ENCODE measurements at regions of chr11 and their contacts with region 1.

Region 1: GRCh38 chr11:110195845-110196754 is 100.3 kb downstream of the RDX start:
- DNase-seq: no peak
- ATAC-seq: no peak
- H3K4me3 ChIP-seq: no peak overlapping the region
- H3K27ac ChIP-seq: no peak overlapping the region
- H3K4me1 ChIP-seq: peaks cover 4% of the 10 kb centered on the region; the same call in 1 of the 2 replicates
- H3K27me3 ChIP-seq: no peaks in the 10 kb centered on the region
- CTCF ChIP-seq: no peak
- EP300 ChIP-seq: no peak
- POLR2A ChIP-seq: no peak
- RAD21 ChIP-seq: no peak

Region 2: GRCh38 chr11:109939166-109939810 is 256.8 kb before region 1 on chr11:
- CTCF ChIA-PET with region 1: interaction called, 21 read pairs
- POLR2A ChIA-PET with region 1: no interaction called
- RAD21 ChIA-PET with region 1: interaction called, 29 read pairs
- SMC1A ChIA-PET with region 1: interaction called, 86 read pairs
- in situ Hi-C with region 1: no loop called
- intact Hi-C with region 1: no loop called
- DNase-seq: no peak
- ATAC-seq: peak; percentile 82
- H3K4me3 ChIP-seq: no peak overlapping the region
- H3K27ac ChIP-seq: no peak overlapping the region
- H3K4me1 ChIP-seq: no peaks in the 10 kb centered on the region
- H3K27me3 ChIP-seq: no peaks in the 10 kb centered on the region; a peak in 1 of 4 replicates
- CTCF ChIP-seq: peak; percentile 49 to 85 (median 60)
- EP300 ChIP-seq: no peak
- POLR2A ChIP-seq: no peak
- RAD21 ChIP-seq: peak; percentile 97

Region 3: DNA sequence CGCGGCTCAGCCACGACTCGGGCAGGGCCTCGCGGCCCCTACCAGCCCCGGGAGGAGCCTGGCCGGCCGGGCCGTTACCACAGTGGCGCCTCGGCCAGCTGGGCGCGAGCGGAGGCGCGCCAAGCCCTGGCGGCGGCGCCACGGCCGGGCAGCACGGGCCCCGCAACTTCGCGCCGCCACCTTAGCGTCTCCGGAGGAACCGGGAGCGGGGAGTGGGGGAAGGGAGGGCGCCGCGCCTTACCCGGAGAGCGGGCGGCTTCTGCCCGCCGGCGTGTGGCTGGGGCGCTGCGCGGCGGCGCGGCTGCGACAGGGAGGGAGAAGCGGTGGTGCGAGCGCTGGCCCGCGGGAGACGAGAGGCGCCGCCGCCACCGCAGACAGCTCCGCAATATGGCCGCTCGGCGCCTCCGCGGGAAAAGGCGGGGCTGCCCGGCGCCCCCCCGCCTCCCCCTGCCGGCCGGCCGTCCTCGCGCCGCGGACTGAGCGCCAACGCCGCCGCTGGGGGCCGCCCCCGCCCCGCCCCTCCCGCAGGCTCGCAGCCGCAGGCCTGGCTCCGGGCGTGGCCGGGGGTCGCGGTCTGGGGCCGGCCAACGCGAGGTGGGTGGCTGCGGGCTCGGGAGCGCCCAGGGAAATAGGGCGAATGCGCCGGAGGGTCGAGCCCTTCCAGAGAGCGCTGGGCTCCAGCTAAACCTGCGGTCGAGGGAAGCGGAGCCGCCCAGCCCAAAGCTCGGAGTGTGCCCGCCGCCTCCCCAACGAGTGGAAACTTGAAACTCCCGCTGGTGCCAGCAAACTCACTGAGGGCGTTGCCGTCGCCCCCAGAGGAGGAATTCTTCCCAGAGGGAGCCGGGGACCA is 100.4 kb after region 1 on chr11 and contains the start of gene RDX:
- CTCF ChIA-PET with region 1: interaction called, 12 read pairs
- POLR2A ChIA-PET with region 1: no interaction called
- RAD21 ChIA-PET with region 1: interaction called, 5 read pairs
- SMC1A ChIA-PET with region 1: interaction called, 3 read pairs
- in situ Hi-C with region 1: no loop called
- intact Hi-C with region 1: no loop called
- DNase-seq: no peak
- ATAC-seq: peak; percentile 73
- H3K4me3 ChIP-seq: peak within 1 kb of the TSS; percentile 98
- H3K27ac ChIP-seq: peak within 1 kb of the TSS; percentile 94
- H3K4me1 ChIP-seq: no peaks in the 10 kb centered on the region
- H3K27me3 ChIP-seq: no peaks in the 10 kb centered on the region
- CTCF ChIP-seq: peak in 1 of 3 experiments; percentile 20; a peak in 1 of 6 replicates
- EP300 ChIP-seq: no peak
- POLR2A ChIP-seq: peak; percentile 82
- RAD21 ChIP-seq: peak; percentile 38; the same call in 1 of the 2 replicates
- polyA plus RNA-seq, gene RDX: 37.4 to 40.3 TPM

Region 4: DNA sequence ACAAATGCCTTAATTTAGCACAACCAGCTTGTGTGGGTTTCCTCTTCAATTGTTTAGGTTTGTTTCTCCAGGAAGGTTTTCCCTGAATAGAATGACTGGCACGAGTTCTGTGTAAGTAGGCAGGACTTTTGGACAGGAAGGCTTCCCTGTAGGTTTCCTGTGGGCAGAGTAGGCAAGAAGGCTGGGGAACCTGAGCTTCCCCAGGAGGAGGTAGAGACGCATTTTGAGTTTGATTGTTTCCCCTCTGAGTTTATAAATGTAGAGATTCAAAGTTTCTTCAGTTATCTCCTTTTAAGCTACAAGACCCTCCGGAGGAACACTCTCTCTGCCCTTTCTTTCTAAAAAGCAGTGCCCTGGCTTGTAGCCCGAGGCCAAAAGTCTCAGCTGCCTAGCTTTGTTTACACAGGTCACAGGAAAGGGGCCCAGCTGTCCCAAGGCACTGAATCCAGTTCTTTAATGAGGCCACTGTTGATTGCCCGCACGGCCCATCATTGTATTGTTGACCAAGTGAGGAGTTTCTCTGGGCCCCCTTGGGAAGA is 166.9 kb after region 1 on chr11:
- CTCF ChIA-PET with region 1: interaction called, 68 read pairs
- POLR2A ChIA-PET with region 1: no interaction called
- RAD21 ChIA-PET with region 1: interaction called, 58 read pairs
- SMC1A ChIA-PET with region 1: interaction called, 109 read pairs
- in situ Hi-C with region 1: no loop called
- intact Hi-C with region 1: no loop called
- DNase-seq: no peak
- ATAC-seq: peak; percentile 73
- H3K4me3 ChIP-seq: no peak overlapping the region
- H3K27ac ChIP-seq: peak overlapping the region; percentile 62; the same call in 1 of the 2 replicates
- H3K4me1 ChIP-seq: peaks cover 7% of the 10 kb centered on the region
- H3K27me3 ChIP-seq: no peaks in the 10 kb centered on the region
- CTCF ChIP-seq: no peak
- EP300 ChIP-seq: no peak
- POLR2A ChIP-seq: no peak
- RAD21 ChIP-seq: no peak

Region 5: GRCh38 chr11:110447897-110448745 is 252.0 kb after region 1 on chr11:
- CTCF ChIA-PET with region 1: interaction called, 14 read pairs
- POLR2A ChIA-PET with region 1: no interaction called
- RAD21 ChIA-PET with region 1: no interaction called
- SMC1A ChIA-PET with region 1: interaction called, 6 read pairs
- in situ Hi-C with region 1: no loop called
- intact Hi-C with region 1: no loop called
- DNase-seq: no peak
- ATAC-seq: peak; percentile 65
- H3K4me3 ChIP-seq: no peak overlapping the region
- H3K27ac ChIP-seq: no peak overlapping the region
- H3K4me1 ChIP-seq: peaks cover 3% of the 10 kb centered on the region; the same call in 1 of the 2 replicates
- H3K27me3 ChIP-seq: no peaks in the 10 kb centered on the region
- CTCF ChIP-seq: peak; percentile 38 to 52 (median 49); a peak in 4 of 6 replicates
- EP300 ChIP-seq: no peak
- POLR2A ChIP-seq: no peak
- RAD21 ChIP-seq: peak; percentile 68

Measured in GM12878 (cell line).